Activated naive CD4-positive, alpha-beta T cell treated with anti-CD3 and anti-CD28 coated beads for 36 hours (primary cell): ENCODE measurements at regions of chr7 and their contacts with region 1.

Region 1: DNA sequence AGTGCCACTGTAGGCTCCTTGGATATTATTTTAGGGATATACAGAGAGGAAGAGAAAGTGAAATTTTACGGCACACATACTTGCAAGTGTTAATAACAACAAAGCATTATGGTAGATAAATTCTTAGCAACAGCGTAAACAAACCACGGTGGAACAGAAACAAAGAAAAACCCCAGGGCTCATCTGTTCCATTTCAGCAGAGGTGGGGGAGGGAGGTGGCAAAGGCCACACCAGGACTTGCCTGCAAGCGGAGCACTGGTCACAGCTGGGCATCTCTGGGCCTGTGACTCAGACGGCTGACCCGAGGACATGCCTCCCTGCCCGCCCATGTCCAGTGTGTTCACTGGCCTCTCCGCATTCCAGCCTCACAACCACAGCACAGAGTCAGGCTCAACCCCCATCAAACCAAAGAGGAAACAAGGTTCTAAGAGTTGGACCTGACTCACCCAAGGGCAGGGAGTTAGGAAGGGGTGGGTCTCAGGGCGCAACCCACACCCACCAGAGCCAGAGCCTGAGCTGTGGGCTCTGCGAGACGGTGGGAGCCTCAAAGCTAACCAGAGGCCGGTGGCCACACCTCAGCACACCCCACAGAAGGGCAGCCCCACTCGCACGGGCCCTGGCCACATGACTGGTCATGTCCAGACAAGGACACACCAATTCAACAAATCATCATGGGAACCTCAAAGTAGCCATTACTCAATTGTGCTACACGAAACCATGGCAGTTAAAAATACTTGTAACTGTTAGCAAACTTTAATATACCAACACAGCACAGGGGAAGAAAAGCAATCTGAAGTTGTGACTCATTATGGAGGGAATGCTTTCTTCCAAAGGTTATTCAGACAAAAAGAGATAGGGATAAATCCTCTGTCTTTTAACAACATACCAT is 10.7 kb downstream of the ESYT2 start:
- DNase-seq: peak; percentile 84
- H3K4me3 Mint-ChIP-seq: peak overlapping the region; percentile 81
- H3K27ac Mint-ChIP-seq: peak overlapping the region; percentile 97
- H3K4me1 Mint-ChIP-seq: peaks cover 85% of the 10 kb centered on the region
- H3K27me3 Mint-ChIP-seq: no peaks in the 10 kb centered on the region

Region 2: GRCh38 chr7:157932498-157933218 is 885.9 kb before region 1 on chr7:
- CTCF ChIA-PET with region 1: no interaction called
- intact Hi-C with region 1: loop called (anchors 5 kb)
- DNase-seq: peak; percentile 31
- H3K4me3 Mint-ChIP-seq: peak overlapping the region; percentile 26
- H3K27ac Mint-ChIP-seq: peak overlapping the region; percentile 95
- H3K4me1 Mint-ChIP-seq: peaks cover 4% of the 10 kb centered on the region
- H3K27me3 Mint-ChIP-seq: peaks cover 7% of the 10 kb centered on the region

Region 3: GRCh38 chr7:158655931-158656441 is 162.6 kb before region 1 on chr7:
- CTCF ChIA-PET with region 1: no interaction called
- intact Hi-C with region 1: loop called (anchors 2 kb)
- DNase-seq: peak; percentile 90
- H3K4me3 Mint-ChIP-seq: no peak overlapping the region
- H3K27ac Mint-ChIP-seq: peak overlapping the region; percentile 84
- H3K4me1 Mint-ChIP-seq: peaks cover 21% of the 10 kb centered on the region
- H3K27me3 Mint-ChIP-seq: no peaks in the 10 kb centered on the region

Region 4: DNA sequence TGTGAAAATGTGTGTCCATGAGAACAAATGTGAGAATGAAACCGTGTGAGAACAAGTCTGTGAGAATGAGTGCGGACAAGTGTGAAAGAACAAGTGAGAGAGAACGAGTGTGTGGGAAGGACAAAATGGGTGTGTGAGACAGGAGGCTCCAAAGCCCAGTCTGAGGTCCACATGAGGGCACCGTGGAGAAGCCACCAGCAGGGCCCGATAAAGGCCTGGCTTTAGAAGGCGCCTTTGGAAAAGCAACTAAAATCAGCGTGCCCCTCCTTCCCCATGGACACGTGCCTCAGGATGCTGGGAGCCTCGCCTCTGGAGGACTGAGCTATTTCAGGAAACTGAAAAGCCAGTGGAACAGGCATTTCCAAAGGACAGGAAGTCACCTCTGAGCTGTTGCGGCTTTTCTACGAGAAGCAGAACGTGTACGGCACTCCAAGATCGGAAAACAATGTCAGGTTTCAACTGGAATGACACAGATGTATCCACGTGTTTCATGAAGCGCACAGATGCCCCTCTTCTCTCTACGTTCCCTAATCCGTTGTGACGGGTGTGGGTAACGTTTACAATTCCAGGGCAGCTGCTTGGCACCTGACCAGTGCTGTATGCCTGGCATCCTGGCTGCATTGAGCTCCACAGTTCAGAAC is 35.7 kb before region 1 on chr7:
- CTCF ChIA-PET with region 1: no interaction called
- intact Hi-C with region 1: loop called (anchors 5 kb)
- DNase-seq: peak; percentile 45
- H3K4me3 Mint-ChIP-seq: no peak overlapping the region
- H3K27ac Mint-ChIP-seq: no peak overlapping the region
- H3K4me1 Mint-ChIP-seq: peaks cover 14% of the 10 kb centered on the region
- H3K27me3 Mint-ChIP-seq: no peaks in the 10 kb centered on the region

Region 5: DNA sequence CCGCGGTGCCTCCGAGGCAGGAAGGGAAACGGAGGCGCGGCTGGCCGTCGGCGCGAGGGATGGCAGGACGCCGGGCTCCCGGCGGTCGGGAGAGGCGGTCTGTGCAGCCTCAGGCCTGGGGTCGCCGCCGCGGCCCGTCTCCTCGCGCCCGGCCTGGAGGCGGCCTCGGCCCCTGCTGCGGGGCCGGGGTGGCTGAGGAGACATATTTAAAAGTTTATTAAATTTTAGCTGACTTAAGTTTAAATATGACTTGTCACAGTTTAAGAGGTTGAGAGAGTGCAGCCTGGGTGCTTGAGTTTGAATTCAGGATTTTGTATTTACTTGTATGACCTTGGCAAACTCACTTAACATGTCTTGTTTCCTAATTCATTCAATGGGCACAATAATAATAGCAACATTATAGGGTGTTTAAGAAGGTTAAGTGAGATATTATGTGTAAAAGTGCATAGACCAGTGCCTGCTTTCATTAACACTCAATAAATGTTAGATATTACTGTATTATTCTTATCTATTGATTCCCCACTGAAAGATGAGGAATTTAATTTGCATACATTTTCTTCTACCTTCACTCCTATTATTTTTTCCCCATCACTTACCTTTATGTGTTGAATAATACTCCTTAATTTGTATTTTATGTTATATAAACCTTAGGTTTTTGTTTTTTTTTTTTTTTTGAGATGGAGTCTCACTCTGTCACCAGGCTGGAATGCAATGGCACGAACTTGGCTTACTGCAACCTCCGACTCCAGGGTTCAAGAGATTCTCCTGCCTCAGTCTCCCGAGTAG is 38.5 kb after region 1 on chr7:
- CTCF ChIA-PET with region 1: interaction called, 3 read pairs
- intact Hi-C with region 1: loop called (anchors 2 kb)
- DNase-seq: no peak
- H3K4me3 Mint-ChIP-seq: peak overlapping the region; percentile 99
- H3K27ac Mint-ChIP-seq: peak overlapping the region; percentile 36
- H3K4me1 Mint-ChIP-seq: peaks cover 32% of the 10 kb centered on the region
- H3K27me3 Mint-ChIP-seq: no peaks in the 10 kb centered on the region

Region 6: GRCh38 chr7:159015454-159016410 is 197.2 kb after region 1 on chr7:
- CTCF ChIA-PET with region 1: no interaction called
- intact Hi-C with region 1: loop called (anchors 5 kb)
- DNase-seq: no peak
- H3K4me3 Mint-ChIP-seq: no peak overlapping the region
- H3K27ac Mint-ChIP-seq: no peak overlapping the region
- H3K4me1 Mint-ChIP-seq: peaks cover 26% of the 10 kb centered on the region
- H3K27me3 Mint-ChIP-seq: peaks cover 6% of the 10 kb centered on the region